GM12878 (cell line): ENCODE measurements at regions of chr14 and their contacts with region 1.

Region 1: GRCh38 chr14:64294672-64295413 is 672 bp upstream of the ESR2 start:
- DNase-seq: peak; percentile 50
- ATAC-seq: peak; percentile 96
- H3K4me3 ChIP-seq: peak overlapping the region; percentile 59
- H3K27ac ChIP-seq: no peak overlapping the region; the same call in 1 of the 2 replicates
- H3K4me1 ChIP-seq: peaks cover 16% of the 10 kb centered on the region
- H3K27me3 ChIP-seq: no peaks in the 10 kb centered on the region; a peak in 1 of 4 replicates
- CTCF ChIP-seq: peak; percentile 92 to 99 (median 94)
- EP300 ChIP-seq: peak; percentile 9 to 53; a peak in 1 of 4 replicates
- POLR2A ChIP-seq: peak; percentile 26; the same call in 1 of the 2 replicates
- RAD21 ChIP-seq: peak; percentile 92

Region 2: GRCh38 chr14:64012720-64013119 is 282.1 kb before region 1 on chr14:
- CTCF ChIA-PET with region 1: interaction called, 39 read pairs
- POLR2A ChIA-PET with region 1: no interaction called
- RAD21 ChIA-PET with region 1: interaction called, 14 read pairs
- SMC1A ChIA-PET with region 1: interaction called, 19 read pairs
- in situ Hi-C with region 1: no loop called
- intact Hi-C with region 1: loop called (anchors 5 kb)
- DNase-seq: no peak
- ATAC-seq: no peak
- H3K4me3 ChIP-seq: no peak overlapping the region
- H3K27ac ChIP-seq: no peak overlapping the region
- H3K4me1 ChIP-seq: no peaks in the 10 kb centered on the region
- H3K27me3 ChIP-seq: no peaks in the 10 kb centered on the region
- CTCF ChIP-seq: no peak
- EP300 ChIP-seq: no peak
- POLR2A ChIP-seq: no peak
- RAD21 ChIP-seq: no peak

Region 3: GRCh38 chr14:64060648-64061096 is 234.2 kb before region 1 on chr14:
- CTCF ChIA-PET with region 1: interaction called, 25 read pairs
- POLR2A ChIA-PET with region 1: no interaction called
- RAD21 ChIA-PET with region 1: interaction called, 5 read pairs
- SMC1A ChIA-PET with region 1: interaction called, 3 read pairs
- in situ Hi-C with region 1: no loop called
- intact Hi-C with region 1: loop called (anchors 10 kb)
- DNase-seq: no peak
- ATAC-seq: peak; percentile 92
- H3K4me3 ChIP-seq: no peak overlapping the region
- H3K27ac ChIP-seq: no peak overlapping the region
- H3K4me1 ChIP-seq: no peaks in the 10 kb centered on the region
- H3K27me3 ChIP-seq: no peaks in the 10 kb centered on the region
- CTCF ChIP-seq: peak; percentile 34 to 67 (median 50); a peak in 5 of 6 replicates
- EP300 ChIP-seq: no peak
- POLR2A ChIP-seq: no peak
- RAD21 ChIP-seq: peak; percentile 42

Region 4: DNA sequence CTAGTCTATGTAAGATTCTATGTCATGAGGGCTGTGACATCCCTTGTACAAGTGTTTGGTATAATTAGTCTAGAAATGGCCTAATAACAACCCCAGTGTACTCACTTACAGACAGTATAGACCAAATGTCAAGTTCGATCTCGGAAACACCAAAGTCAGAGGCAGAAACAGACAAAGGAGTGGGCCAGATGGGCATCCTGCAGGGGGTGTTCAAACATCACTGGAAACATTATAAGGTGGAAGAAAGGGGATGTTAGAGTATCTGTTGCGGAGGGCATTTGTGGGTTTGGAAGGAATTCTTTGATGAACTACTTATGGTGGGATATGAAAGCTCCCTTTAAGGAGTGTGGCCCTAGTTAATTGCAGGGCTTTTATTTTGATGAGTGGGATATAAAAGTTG is 135.3 kb before region 1 on chr14:
- CTCF ChIA-PET with region 1: interaction called, 16 read pairs
- POLR2A ChIA-PET with region 1: no interaction called
- RAD21 ChIA-PET with region 1: no interaction called
- SMC1A ChIA-PET with region 1: interaction called, 15 read pairs
- in situ Hi-C with region 1: no loop called
- intact Hi-C with region 1: loop called (anchors 1 kb)
- DNase-seq: no peak
- ATAC-seq: no peak
- H3K4me3 ChIP-seq: no peak overlapping the region
- H3K27ac ChIP-seq: no peak overlapping the region
- H3K4me1 ChIP-seq: no peaks in the 10 kb centered on the region
- H3K27me3 ChIP-seq: no peaks in the 10 kb centered on the region
- CTCF ChIP-seq: peak; percentile 18 to 51 (median 25); a peak in 4 of 6 replicates
- EP300 ChIP-seq: no peak
- POLR2A ChIP-seq: no peak
- RAD21 ChIP-seq: peak; percentile 44

Region 5: DNA sequence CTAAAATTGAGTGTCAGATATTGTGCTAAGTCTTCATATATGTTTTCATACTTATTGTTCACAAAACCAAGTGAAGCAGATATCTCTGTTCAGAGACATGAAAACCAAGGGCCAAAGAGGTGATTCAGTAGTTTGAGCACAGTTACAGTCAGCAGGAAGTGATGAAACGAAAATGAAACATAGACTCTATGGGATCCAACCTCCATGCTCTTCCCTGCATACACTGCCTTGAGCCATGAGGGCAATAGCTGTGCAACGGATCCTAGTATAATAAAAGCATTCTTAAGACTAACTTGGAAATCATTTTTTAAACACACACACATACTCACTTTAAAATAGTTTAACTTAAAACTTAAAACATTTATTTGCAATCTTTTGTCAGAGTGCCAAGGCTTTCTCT is 28.6 kb before region 1 on chr14:
- CTCF ChIA-PET with region 1: interaction called, 4 read pairs
- POLR2A ChIA-PET with region 1: no interaction called
- RAD21 ChIA-PET with region 1: interaction called, 3 read pairs
- SMC1A ChIA-PET with region 1: interaction called, 10 read pairs
- in situ Hi-C with region 1: no loop called
- intact Hi-C with region 1: no loop called
- DNase-seq: no peak
- ATAC-seq: peak; percentile 85
- H3K4me3 ChIP-seq: no peak overlapping the region
- H3K27ac ChIP-seq: no peak overlapping the region
- H3K4me1 ChIP-seq: 0 out of 2 replicates have a peak, but pooled peaks cover 5% of the 10 kb centered on the region
- H3K27me3 ChIP-seq: no peaks in the 10 kb centered on the region
- CTCF ChIP-seq: no peak
- EP300 ChIP-seq: no peak
- POLR2A ChIP-seq: no peak
- RAD21 ChIP-seq: no peak

Region 6: GRCh38 chr14:64503478-64504309 is 208.9 kb after region 1 on chr14 and contains the start of gene ZBTB25:
- CTCF ChIA-PET with region 1: no interaction called
- POLR2A ChIA-PET with region 1: no interaction called
- RAD21 ChIA-PET with region 1: no interaction called
- SMC1A ChIA-PET with region 1: no interaction called
- in situ Hi-C with region 1: no loop called
- intact Hi-C with region 1: no loop called
- DNase-seq: peak; percentile 83
- ATAC-seq: peak; percentile 71
- H3K4me3 ChIP-seq: peak within 1 kb of the TSS; percentile 91
- H3K27ac ChIP-seq: peak within 1 kb of the TSS; percentile 98
- H3K4me1 ChIP-seq: peaks cover 6% of the 10 kb centered on the region
- H3K27me3 ChIP-seq: no peaks in the 10 kb centered on the region
- CTCF ChIP-seq: no peak
- EP300 ChIP-seq: peak; percentile 82 to 86
- POLR2A ChIP-seq: peak; percentile 85
- RAD21 ChIP-seq: no peak
- polyA plus RNA-seq, gene ZBTB25: 4.1 to 5.6 TPM

Region 7: GRCh38 chr14:65502676-65503124 is 1207.9 kb after region 1 on chr14:
- CTCF ChIA-PET with region 1: no interaction called
- POLR2A ChIA-PET with region 1: no interaction called
- RAD21 ChIA-PET with region 1: no interaction called
- SMC1A ChIA-PET with region 1: no interaction called
- in situ Hi-C with region 1: no loop called
- intact Hi-C with region 1: no loop called
- DNase-seq: peak; percentile 62
- ATAC-seq: peak; percentile 79
- H3K4me3 ChIP-seq: no peak overlapping the region
- H3K27ac ChIP-seq: peak overlapping the region; percentile 65
- H3K4me1 ChIP-seq: peaks cover 21% of the 10 kb centered on the region; the same call in 1 of the 2 replicates
- H3K27me3 ChIP-seq: no peaks in the 10 kb centered on the region
- CTCF ChIP-seq: no peak
- EP300 ChIP-seq: peak; percentile 25 to 45; a peak in 1 of 4 replicates
- POLR2A ChIP-seq: no peak
- RAD21 ChIP-seq: no peak